Activated T-helper 2 cell treated with anti-CD3 and anti-CD28 coated beads, Interferon-gamma antibody, Interleukin-2, Interleukin-4, amounts not matched to agents 10 μg/mL and 5 μg/mL and 100 μg/mL, durations not matched to agents 14 hours and 24 hours and 36 hours (primary cell): ENCODE measurements at regions of chr19 and their contacts with region 1.

Region 1: DNA sequence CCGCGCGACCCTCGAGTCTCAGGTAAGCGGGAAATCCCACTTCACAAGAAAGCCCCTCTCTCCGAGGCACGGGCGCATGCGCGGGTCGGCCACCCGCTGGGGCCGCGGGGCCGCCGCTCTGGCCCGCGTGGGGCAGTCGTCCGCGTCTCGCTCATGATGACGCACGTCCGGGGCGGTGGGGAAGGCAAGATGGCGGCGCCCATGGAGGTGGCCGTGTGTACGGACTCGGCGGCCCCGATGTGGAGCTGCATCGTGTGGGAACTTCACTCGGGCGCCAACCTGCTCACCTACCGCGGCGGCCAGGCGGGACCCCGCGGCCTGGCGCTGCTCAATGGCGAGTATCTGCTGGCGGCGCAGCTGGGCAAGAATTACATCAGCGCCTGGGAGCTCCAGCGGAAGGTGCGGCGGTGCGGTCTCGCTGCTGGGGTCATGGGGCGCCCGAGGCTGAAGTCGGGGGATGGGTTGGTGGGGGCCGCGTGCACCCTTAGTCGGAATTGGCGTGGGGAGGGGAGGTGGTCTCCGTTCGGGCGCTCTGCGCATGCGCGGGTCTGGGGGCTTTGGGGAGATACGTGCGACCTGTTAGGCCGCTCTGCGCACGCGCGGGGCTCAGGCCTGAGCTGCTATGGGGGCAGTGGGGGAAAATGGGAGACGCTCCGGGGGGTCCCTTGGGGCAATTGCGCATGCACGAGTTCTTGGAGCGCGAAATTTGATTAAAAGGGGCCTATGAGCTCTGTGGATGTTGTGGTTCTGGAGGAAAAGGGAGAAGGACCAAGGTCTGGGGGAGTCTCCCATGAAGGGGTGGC is at the start of gene WDR18:
- DNase-seq: peak; percentile 86
- H3K4me3 Mint-ChIP-seq: peak within 1 kb of the TSS; percentile 95
- H3K27ac Mint-ChIP-seq: peak within 1 kb of the TSS; percentile 94
- H3K4me1 Mint-ChIP-seq: peaks cover 11% of the 10 kb centered on the region
- H3K27me3 Mint-ChIP-seq: no peaks in the 10 kb centered on the region
- total RNA-seq, gene WDR18: 88.6 and 94.9 TPM in 2 replicates

Region 2: DNA sequence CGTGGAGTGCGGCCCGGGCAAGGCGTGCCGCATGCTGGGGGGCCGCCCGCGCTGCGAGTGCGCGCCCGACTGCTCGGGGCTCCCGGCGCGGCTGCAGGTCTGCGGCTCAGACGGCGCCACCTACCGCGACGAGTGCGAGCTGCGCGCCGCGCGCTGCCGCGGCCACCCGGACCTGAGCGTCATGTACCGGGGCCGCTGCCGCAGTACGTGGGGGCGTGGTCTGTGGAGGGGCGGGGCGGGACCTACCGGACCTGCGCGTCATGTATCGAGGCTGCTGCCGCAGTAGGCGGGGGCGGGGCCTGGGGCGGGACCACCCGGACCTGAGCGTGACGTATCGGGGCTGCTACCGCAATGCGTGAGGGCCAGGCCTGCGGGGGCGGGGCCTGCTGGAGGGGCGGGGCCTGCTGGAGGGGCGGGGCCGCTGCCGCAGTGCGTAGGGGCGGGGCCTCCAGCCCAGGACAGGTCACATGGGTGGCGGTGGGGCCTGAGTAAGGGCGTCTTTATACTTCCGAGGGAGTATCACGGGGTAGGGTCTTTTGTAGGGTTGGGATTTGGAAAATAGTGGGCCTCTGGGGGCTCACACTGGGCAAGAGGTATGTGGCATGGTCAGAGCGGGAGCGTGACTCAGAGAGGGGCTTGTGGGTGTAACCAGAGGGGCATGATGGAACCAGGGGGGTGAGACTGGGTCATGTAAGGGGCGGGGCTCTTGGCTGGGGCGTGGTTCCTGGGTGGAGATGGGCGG is 303.9 kb before region 1 on chr19:
- intact Hi-C with region 1: no loop called
- DNase-seq: peak; percentile 97
- H3K4me3 Mint-ChIP-seq: peak overlapping the region; percentile 88
- H3K27ac Mint-ChIP-seq: peak overlapping the region; percentile 97
- H3K4me1 Mint-ChIP-seq: peaks cover 1% of the 10 kb centered on the region
- H3K27me3 Mint-ChIP-seq: peaks cover 7% of the 10 kb centered on the region

Region 3: GRCh38 chr19:796692-797527 is 187.5 kb before region 1 on chr19 and contains the start of gene PTBP1:
- intact Hi-C with region 1: no loop called
- DNase-seq: peak; percentile 100
- H3K4me3 Mint-ChIP-seq: peak within 1 kb of the TSS; percentile 91
- H3K27ac Mint-ChIP-seq: peak within 1 kb of the TSS; percentile 93
- H3K4me1 Mint-ChIP-seq: peaks cover 20% of the 10 kb centered on the region
- H3K27me3 Mint-ChIP-seq: no peaks in the 10 kb centered on the region
- total RNA-seq, gene PTBP1: 735 and 739 TPM in 2 replicates

Region 4: GRCh38 chr19:860481-861101 is 123.8 kb before region 1 on chr19:
- intact Hi-C with region 1: loop called (anchors 5 kb)
- DNase-seq: peak; percentile 51
- H3K4me3 Mint-ChIP-seq: peak overlapping the region; percentile 17
- H3K27ac Mint-ChIP-seq: no peak overlapping the region
- H3K4me1 Mint-ChIP-seq: peaks cover 9% of the 10 kb centered on the region
- H3K27me3 Mint-ChIP-seq: peaks cover 6% of the 10 kb centered on the region

Region 5: DNA sequence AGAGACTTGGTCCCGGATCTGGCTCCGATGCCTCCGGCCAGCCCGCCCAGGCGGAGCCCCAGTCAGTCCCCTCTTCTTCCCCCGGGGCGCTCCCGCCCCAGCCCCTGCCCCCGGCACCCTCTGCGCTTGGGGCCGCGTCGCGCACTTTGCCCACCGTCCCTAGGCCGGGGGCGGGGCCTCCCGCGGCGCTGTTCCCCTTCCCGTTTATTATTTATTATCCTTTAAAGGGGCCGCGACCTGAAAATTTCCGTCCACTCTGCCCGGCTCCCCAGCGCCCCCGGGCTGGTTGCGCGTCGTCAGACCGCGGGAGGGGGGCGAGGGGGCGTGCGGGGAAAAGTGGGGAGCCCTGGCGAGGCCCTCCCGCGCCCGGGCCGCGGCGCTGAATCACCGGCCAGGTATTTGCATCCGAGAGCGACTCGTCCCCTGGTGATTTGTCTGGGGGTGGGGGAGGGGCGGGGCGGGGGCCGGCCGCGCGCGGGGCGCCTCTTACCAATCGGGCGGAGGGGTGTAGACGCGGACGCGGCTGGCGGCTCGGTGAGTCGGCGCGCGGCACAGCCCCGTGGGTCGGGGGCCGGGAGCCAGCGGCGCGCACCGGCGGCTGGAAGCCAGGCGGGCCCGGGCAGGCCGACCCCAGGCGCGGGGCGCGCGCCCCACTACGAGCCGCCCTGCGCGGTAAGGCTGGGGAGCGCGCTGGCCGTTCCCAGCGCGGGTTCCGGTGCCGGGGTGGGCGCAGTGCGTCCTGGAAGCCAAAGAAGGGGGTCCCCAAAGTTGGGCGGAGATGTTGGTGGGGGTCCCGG is 58.6 kb before region 1 on chr19 and contains the start of gene ARID3A:
- intact Hi-C with region 1: loop called (anchors 1 kb)
- DNase-seq: peak; percentile 77
- H3K4me3 Mint-ChIP-seq: peak within 1 kb of the TSS; percentile 83
- H3K27ac Mint-ChIP-seq: peak within 1 kb of the TSS; percentile 80
- H3K4me1 Mint-ChIP-seq: peaks cover 10% of the 10 kb centered on the region
- H3K27me3 Mint-ChIP-seq: peaks cover under 1% of the 10 kb centered on the region
- total RNA-seq, gene ARID3A: 42.0 and 42.6 TPM in 2 replicates

Region 6: GRCh38 chr19:958967-959820 is 25.2 kb before region 1 on chr19:
- intact Hi-C with region 1: no loop called
- DNase-seq: no peak
- H3K4me3 Mint-ChIP-seq: no peak overlapping the region
- H3K27ac Mint-ChIP-seq: peak overlapping the region; percentile 22
- H3K4me1 Mint-ChIP-seq: peaks cover 7% of the 10 kb centered on the region
- H3K27me3 Mint-ChIP-seq: no peaks in the 10 kb centered on the region

Region 7: GRCh38 chr19:1020868-1021425 is 36.6 kb after region 1 on chr19 and contains the start of gene TMEM259:
- intact Hi-C with region 1: loop called (anchors 1 kb)
- DNase-seq: peak; percentile 94
- H3K4me3 Mint-ChIP-seq: peak within 1 kb of the TSS; percentile 91
- H3K27ac Mint-ChIP-seq: peak within 1 kb of the TSS; percentile 100
- H3K4me1 Mint-ChIP-seq: peaks cover 20% of the 10 kb centered on the region
- H3K27me3 Mint-ChIP-seq: no peaks in the 10 kb centered on the region
- total RNA-seq, gene TMEM259: 137 and 138 TPM in 2 replicates